Caco-2 (cell line): ENCODE measurements at regions of chr2 and their contacts with region 1.

Region 1: GRCh38 chr2:11344342-11344955 is at the start of gene ROCK2:
- DNase-seq: peak; percentile 94 to 95
- H3K4me3 ChIP-seq: peak within 1 kb of the TSS; percentile 82
- H3K4me3 Mint-ChIP-seq: peak within 1 kb of the TSS; percentile 97
- H3K27ac Mint-ChIP-seq: peak within 1 kb of the TSS; percentile 99
- H3K4me1 ChIP-seq: peaks cover 25% of the 10 kb centered on the region
- H3K4me1 Mint-ChIP-seq: peaks cover 3% of the 10 kb centered on the region
- H3K27me3 ChIP-seq: no peaks in the 10 kb centered on the region
- H3K27me3 Mint-ChIP-seq: no peaks in the 10 kb centered on the region
- CTCF ChIP-seq: no peak
- total RNA-seq, gene ROCK2: 61.6 and 64.4 TPM in 2 replicates

Region 2: GRCh38 chr2:11154923-11155380 is 189.5 kb before region 1 on chr2:
- CTCF ChIA-PET with region 1: interaction called, 3 read pairs
- POLR2A ChIA-PET with region 1: interaction called, 4 read pairs
- intact Hi-C with region 1: loop called (anchors 10 kb)
- DNase-seq: peak; percentile 99
- H3K4me3 ChIP-seq: peak overlapping the region; percentile 34
- H3K4me3 Mint-ChIP-seq: peak overlapping the region; percentile 55
- H3K27ac Mint-ChIP-seq: peak overlapping the region; percentile 92
- H3K4me1 ChIP-seq: peaks cover 11% of the 10 kb centered on the region
- H3K4me1 Mint-ChIP-seq: no peaks in the 10 kb centered on the region
- H3K27me3 ChIP-seq: no peaks in the 10 kb centered on the region
- H3K27me3 Mint-ChIP-seq: no peaks in the 10 kb centered on the region
- CTCF ChIP-seq: no peak

Region 3: DNA sequence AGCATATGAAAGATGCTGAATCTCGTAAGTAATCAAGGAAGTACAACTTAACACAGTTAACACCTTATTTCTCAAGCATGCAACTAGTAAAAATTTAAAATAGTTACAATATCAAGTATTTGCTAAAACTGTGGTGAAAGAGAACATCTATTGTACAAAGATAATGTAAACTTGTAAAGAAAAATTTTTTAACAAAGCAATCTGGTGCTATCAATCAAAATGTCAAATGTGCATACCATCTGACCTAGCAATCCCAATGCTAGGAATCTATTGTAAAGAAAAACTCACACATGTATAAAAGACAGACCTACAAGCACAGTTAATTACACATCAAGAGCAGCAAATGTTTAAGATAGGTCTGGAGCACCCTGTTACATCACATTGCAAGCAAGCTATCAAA is 99.1 kb before region 1 on chr2:
- CTCF ChIA-PET with region 1: no interaction called
- POLR2A ChIA-PET with region 1: no interaction called
- intact Hi-C with region 1: loop called (anchors 5 kb)
- DNase-seq: no peak
- H3K4me3 ChIP-seq: no peak overlapping the region
- H3K4me3 Mint-ChIP-seq: no peak overlapping the region
- H3K27ac Mint-ChIP-seq: no peak overlapping the region
- H3K4me1 ChIP-seq: peaks cover 5% of the 10 kb centered on the region; the same call in 1 of the 2 replicates
- H3K4me1 Mint-ChIP-seq: no peaks in the 10 kb centered on the region
- H3K27me3 ChIP-seq: no peaks in the 10 kb centered on the region
- H3K27me3 Mint-ChIP-seq: no peaks in the 10 kb centered on the region
- CTCF ChIP-seq: no peak

Region 4: GRCh38 chr2:11370377-11371091 is 26.1 kb after region 1 on chr2:
- CTCF ChIA-PET with region 1: interaction called, 4 read pairs
- POLR2A ChIA-PET with region 1: interaction called, 9 read pairs
- intact Hi-C with region 1: loop called (anchors 2 kb)
- DNase-seq: peak; percentile 66 to 89
- H3K4me3 ChIP-seq: no peak overlapping the region
- H3K4me3 Mint-ChIP-seq: no peak overlapping the region
- H3K27ac Mint-ChIP-seq: peak overlapping the region; percentile 28
- H3K4me1 ChIP-seq: peaks cover 45% of the 10 kb centered on the region
- H3K4me1 Mint-ChIP-seq: peaks cover 28% of the 10 kb centered on the region
- H3K27me3 ChIP-seq: no peaks in the 10 kb centered on the region
- H3K27me3 Mint-ChIP-seq: no peaks in the 10 kb centered on the region
- CTCF ChIP-seq: no peak

Region 5: DNA sequence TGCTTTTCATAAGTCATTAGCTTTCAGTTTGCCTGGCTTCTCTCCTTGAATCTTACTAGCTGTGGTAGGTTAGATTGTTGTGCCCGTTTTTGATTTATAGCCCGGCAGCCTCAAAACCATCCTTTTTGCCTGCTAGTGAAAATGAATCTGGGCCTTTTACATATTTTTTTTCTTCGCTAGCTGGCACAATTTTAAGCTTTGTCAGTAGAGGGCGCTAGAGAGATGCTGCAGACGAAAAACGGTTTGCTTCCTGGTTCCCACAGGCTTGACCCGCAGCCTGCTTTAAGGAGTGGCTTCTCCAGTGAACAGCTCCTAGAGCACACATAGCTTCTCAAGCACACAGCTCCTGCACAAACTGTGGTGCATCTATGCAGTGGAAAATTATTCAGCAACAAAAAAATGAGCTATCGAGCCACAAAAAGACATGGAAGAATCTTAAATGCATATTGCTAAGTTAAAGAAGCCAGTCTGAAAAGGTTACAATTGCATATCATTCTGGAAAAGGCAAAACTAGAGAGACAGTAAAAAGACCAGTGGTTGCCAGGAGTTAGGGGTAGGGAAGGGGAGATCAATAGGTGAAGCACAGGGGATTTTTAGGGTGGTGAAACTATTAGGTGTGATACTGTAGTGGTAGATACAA is 73.6 kb after region 1 on chr2:
- CTCF ChIA-PET with region 1: interaction called, 10 read pairs
- POLR2A ChIA-PET with region 1: no interaction called
- intact Hi-C with region 1: no loop called
- DNase-seq: peak; percentile 63 to 77
- H3K4me3 ChIP-seq: no peak overlapping the region
- H3K4me3 Mint-ChIP-seq: no peak overlapping the region
- H3K27ac Mint-ChIP-seq: no peak overlapping the region
- H3K4me1 ChIP-seq: no peaks in the 10 kb centered on the region
- H3K4me1 Mint-ChIP-seq: no peaks in the 10 kb centered on the region
- H3K27me3 ChIP-seq: no peaks in the 10 kb centered on the region
- H3K27me3 Mint-ChIP-seq: no peaks in the 10 kb centered on the region
- CTCF ChIP-seq: peak; percentile 84 to 85

Region 6: GRCh38 chr2:11669454-11670291 is 325.2 kb after region 1 on chr2 and contains the start of gene NTSR2:
- CTCF ChIA-PET with region 1: no interaction called
- POLR2A ChIA-PET with region 1: no interaction called
- intact Hi-C with region 1: no loop called
- DNase-seq: peak; percentile 39 to 65
- H3K4me3 ChIP-seq: no peak within 1 kb of the TSS
- H3K4me3 Mint-ChIP-seq: no peak within 1 kb of the TSS
- H3K27ac Mint-ChIP-seq: no peak within 1 kb of the TSS
- H3K4me1 ChIP-seq: no peaks in the 10 kb centered on the region
- H3K4me1 Mint-ChIP-seq: no peaks in the 10 kb centered on the region
- H3K27me3 ChIP-seq: no peaks in the 10 kb centered on the region
- H3K27me3 Mint-ChIP-seq: peaks cover 6% of the 10 kb centered on the region
- CTCF ChIP-seq: no peak
- total RNA-seq, gene NTSR2: not detected in 2 replicates